Gastrocnemius medialis (tissue), 4 donors: ENCODE measurements at regions of chr9 and their contacts with region 1.

Region 1: GRCh38 chr9:121074635-121075385 is at the start of gene CNTRL:
- DNase-seq: peak; percentile 64 to 73
- ATAC-seq: peak; percentile 80 to 85
- H3K4me3 ChIP-seq: peak within 1 kb of the TSS; percentile 68 to 81 (median 70)
- H3K27ac ChIP-seq: peak within 1 kb of the TSS; percentile 66 to 77 (median 74)
- H3K4me1 ChIP-seq: peaks cover 0 to 10% of the 10 kb centered on the region in 2 donors
- H3K27me3 ChIP-seq: peaks cover 10 to 20% (median 16%) of the 10 kb centered on the region in 3 donors
- CTCF ChIP-seq: no peak
- POLR2A ChIP-seq: peak; percentile 9 to 53
- total RNA-seq, gene CNTRL: 1.0 to 3.2 (median 1.6) TPM

Region 2: GRCh38 chr9:121121582-121122087 is 46.8 kb after region 1 on chr9:
- in situ Hi-C with region 1: no loop called
- intact Hi-C with region 1: loop called (anchors 2 kb)
- DNase-seq: peak; percentile 94 to 98
- ATAC-seq: peak; percentile 100
- H3K4me3 ChIP-seq: peak overlapping the region; percentile 36 to 58 (median 54)
- H3K27ac ChIP-seq: peak overlapping the region; percentile 49 to 74 (median 62)
- H3K4me1 ChIP-seq: peaks cover 9 to 12% of the 10 kb centered on the region in 2 donors
- H3K27me3 ChIP-seq: no peaks in the 10 kb centered on the region
- CTCF ChIP-seq: peak in 4 of 5 experiments; percentile 26 to 66 (median 49)
- POLR2A ChIP-seq: peak; percentile 34 to 68